Posterior vena cava (tissue), 2 donors: ENCODE measurements at regions of chr15 and their contacts with region 1.

Region 1: GRCh38 chr15:68701886-68702285 is 118.8 kb downstream of the ANP32A start:
- DNase-seq: no peak

Region 2: DNA sequence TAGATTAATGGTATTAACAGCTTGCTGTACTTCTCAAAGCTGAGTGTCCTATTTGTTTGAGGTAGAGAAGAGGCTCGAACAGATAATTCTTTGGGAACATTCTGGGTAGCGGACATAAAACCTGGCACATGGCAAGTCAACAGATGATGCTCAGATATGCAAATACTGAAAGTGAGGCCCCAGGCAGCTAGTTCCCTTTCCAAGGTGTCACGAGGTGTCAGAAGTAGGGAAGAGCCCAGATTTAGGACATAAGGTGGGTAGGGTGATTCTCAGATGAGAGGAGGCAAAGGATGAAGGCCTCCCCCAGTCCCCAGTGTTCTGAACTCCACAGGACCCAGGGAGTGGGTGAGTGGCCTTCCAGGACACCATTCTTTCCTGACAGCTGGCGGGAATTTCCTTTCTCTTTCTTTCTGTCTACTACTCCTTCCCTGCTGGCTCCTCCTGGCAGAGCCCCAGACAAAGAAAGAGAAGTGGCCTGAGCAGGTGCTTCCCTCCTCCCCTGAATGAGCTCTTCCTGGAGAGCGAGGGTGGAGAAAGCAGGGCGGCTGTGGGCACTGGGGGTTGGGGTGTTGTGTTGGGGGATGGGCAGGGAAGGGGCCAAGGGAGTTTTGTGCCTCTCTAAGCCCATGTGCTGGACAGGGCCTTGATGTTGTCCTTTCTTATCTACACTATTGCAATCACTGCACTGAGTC is 35.6 kb before region 1 on chr15:
- intact Hi-C with region 1: loop called in 1 of 2 experiments (anchors 1 kb)
- DNase-seq: no peak